ENCODE measurements at regions of chr15 and their contacts with region 1.

Region 1: GRCh38 chr15:83564975-83565532 is 88.9 kb upstream of the ADAMTSL3 start:
- DNase-seq: no peak
- ATAC-seq: no peak
- H3K4me3 Mint-ChIP-seq: no peak overlapping the region
- H3K27ac Mint-ChIP-seq: no peak overlapping the region
- H3K4me1 Mint-ChIP-seq: no peaks in the 10 kb centered on the region
- H3K27me3 Mint-ChIP-seq: no peaks in the 10 kb centered on the region

Region 2: GRCh38 chr15:84023636-84024035 is 458.6 kb after region 1 on chr15:
- CTCF ChIA-PET with region 1: no interaction called
- POLR2A ChIA-PET with region 1: no interaction called
- intact Hi-C with region 1: loop called in 1 of 2 experiments (anchors 2 kb)
- DNase-seq: peak; percentile 56
- ATAC-seq: no peak
- H3K4me3 Mint-ChIP-seq: no peak overlapping the region
- H3K27ac Mint-ChIP-seq: no peak overlapping the region
- H3K4me1 Mint-ChIP-seq: no peaks in the 10 kb centered on the region
- H3K27me3 Mint-ChIP-seq: peaks cover 1% of the 10 kb centered on the region

Region 3: DNA sequence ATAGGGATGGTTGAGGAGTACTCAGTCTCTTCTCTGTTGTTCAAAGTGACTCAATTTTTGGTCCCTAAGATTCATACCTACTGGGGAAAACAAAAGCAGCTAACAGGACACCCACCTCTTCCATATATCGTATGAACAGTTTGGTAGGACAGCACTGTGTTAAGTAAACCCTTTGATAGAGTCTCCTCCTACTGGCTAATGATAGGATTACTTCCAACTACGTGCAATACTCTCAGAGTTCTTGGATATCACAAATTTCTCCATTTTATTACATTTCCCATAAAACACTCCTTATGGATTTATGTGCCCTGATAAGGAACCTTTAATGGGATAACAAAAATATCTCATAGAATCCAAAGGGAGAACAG is 470.3 kb after region 1 on chr15:
- CTCF ChIA-PET with region 1: interaction called, 3 read pairs
- POLR2A ChIA-PET with region 1: no interaction called
- intact Hi-C with region 1: loop called in 1 of 2 experiments (anchors 1 kb)
- DNase-seq: no peak
- ATAC-seq: no peak
- H3K4me3 Mint-ChIP-seq: no peak overlapping the region
- H3K27ac Mint-ChIP-seq: no peak overlapping the region
- H3K4me1 Mint-ChIP-seq: no peaks in the 10 kb centered on the region
- H3K27me3 Mint-ChIP-seq: peaks cover 14% of the 10 kb centered on the region